Aorta (tissue), 5 donors: ENCODE measurements at regions of chr7 and their contacts with region 1.

Region 1: GRCh38 chr7:129952653-129953560 is at the start of gene UBE2H:
- DNase-seq: peak; percentile 92 to 97
- ATAC-seq: peak; percentile 94
- H3K4me3 ChIP-seq: peak within 1 kb of the TSS; percentile 94 to 100
- H3K27ac ChIP-seq: peak within 1 kb of the TSS; percentile 78
- H3K4me1 ChIP-seq: no peaks in the 10 kb centered on the region
- H3K27me3 ChIP-seq: no peaks in the 10 kb centered on the region
- total RNA-seq, gene UBE2H: 141 to 173 TPM

Region 2: DNA sequence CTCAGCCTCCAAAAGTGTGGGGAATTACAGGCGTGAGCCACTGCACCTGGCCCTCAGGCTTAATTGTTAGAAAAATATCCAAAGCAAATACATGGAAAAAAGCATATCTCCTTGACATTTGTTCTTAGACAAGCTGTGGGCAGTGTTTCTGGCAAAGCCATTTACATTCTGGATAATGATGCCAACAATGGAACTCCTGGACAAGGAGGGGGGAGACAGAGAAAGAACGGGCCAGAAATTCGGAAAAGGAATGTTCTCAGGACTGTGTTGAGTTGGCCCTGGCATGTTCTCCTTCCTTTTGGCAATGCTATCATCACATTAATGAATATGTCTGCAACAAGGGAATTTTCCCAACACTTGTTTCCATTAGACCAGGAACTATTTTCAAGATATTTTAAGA is 88.9 kb before region 1 on chr7:
- intact Hi-C with region 1: loop called in 1 of 2 experiments (anchors 5 kb)
- DNase-seq: peak in 1 of 2 donors; percentile 58
- ATAC-seq: peak; percentile 84
- H3K4me3 ChIP-seq: no peak overlapping the region
- H3K27ac ChIP-seq: peak overlapping the region in 1 of 2 donors; percentile 89
- H3K4me1 ChIP-seq: peaks cover 13 to 15% of the 10 kb centered on the region in 2 donors
- H3K27me3 ChIP-seq: no peaks in the 10 kb centered on the region

Region 3: DNA sequence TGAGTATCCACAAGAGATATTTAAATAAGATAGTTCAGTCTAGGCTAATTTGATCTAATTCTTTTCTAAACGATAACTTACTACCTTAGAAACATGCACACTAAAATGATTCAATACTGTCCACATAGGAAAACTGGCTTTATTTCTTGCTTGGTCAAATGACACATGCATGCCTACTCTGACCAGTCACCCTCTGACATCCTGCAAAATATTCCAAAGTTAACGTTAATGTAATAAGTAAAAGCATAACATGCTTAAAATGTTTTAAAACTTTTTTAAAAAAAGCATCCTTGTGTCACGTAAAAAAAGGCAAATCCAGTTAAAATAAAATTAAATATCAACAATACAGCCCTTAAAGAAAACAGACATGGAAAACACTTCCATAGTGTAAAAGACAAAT is 70.4 kb before region 1 on chr7:
- intact Hi-C with region 1: loop called in 1 of 2 experiments (anchors 5 kb)
- DNase-seq: no peak
- ATAC-seq: no peak
- H3K4me3 ChIP-seq: no peak overlapping the region
- H3K27ac ChIP-seq: no peak overlapping the region
- H3K4me1 ChIP-seq: peaks cover 3 to 4% of the 10 kb centered on the region in 2 donors
- H3K27me3 ChIP-seq: no peaks in the 10 kb centered on the region

Region 4: DNA sequence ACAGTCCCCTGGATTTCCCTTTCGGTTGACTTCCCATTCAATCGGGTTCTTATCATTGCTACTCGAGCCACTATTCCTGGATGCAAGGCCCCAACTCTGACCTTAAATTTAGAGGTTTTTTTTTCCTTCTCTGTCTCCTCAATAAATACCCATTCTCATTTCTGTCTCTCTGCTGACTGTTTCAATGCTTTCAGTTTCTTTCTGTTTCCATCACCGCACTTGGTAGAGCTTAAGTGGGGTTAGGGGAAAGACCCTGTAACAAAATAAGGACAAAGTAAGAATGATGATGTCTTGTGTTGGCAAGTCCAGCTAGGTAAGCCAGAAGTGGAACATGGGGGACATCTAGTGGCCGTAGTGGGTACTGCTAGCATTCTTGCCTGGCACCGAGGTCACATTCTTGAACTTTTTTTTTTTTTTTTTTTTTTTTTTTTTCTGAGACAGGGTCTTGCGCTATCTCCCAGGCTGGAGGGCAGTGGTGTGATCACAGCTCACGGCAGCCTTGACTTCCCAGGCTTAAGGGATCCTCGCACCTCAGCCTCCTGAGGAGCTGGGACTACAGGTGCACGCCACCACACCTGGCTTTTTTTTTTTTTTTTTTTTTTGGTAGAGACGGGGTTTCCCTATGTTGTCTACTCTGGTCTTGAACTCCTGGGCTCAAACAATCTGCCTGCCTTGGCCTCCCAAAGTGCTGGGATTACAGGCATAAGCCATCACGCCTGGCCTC is 57.9 kb after region 1 on chr7:
- intact Hi-C with region 1: loop called (anchors 2 kb)
- DNase-seq: peak; percentile 87
- ATAC-seq: peak; percentile 86
- H3K4me3 ChIP-seq: no peak overlapping the region
- H3K27ac ChIP-seq: peak overlapping the region in 1 of 2 donors; percentile 47
- H3K4me1 ChIP-seq: peaks cover 0 to 3% of the 10 kb centered on the region in 2 donors
- H3K27me3 ChIP-seq: no peaks in the 10 kb centered on the region